ENCODE measurements at regions of chr10 and their contacts with region 1.

Region 1: DNA sequence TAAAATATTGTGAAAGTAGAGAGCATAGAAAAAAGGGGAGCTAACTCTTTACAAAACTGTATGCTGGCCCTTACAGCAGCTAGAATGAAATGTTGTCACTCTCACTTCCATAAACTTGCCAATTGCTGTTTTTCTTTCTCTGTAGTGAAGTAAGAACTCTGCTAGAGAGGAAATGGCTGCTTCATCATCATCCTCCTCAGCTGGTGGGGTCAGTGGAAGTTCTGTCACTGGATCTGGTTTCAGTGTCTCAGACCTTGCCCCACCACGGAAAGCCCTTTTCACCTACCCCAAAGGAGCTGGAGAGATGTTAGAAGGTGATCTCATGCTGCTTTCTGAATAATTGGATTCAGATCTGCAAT is 7.6 kb upstream of the ASCC1 start:
- DNase-seq: no peak
- ATAC-seq: no peak
- H3K4me3 ChIP-seq: no peak overlapping the region
- H3K4me3 Mint-ChIP-seq: peak overlapping the region in 1 of 3 donors; percentile 55
- H3K27ac ChIP-seq: no peak overlapping the region
- H3K27ac Mint-ChIP-seq: peak overlapping the region in 1 of 2 donors; percentile 62
- H3K4me1 ChIP-seq: peaks cover 25 to 43% of the 10 kb centered on the region in 2 experiments
- H3K4me1 Mint-ChIP-seq: peaks cover 54 to 64% (median 56%) of the 10 kb centered on the region in 3 donors
- H3K27me3 ChIP-seq: no peaks in the 10 kb centered on the region
- H3K27me3 Mint-ChIP-seq: no peaks in the 10 kb centered on the region

Region 2: GRCh38 chr10:70656489-70656888 is 1567.2 kb before region 1 on chr10:
- CTCF ChIA-PET with region 1: no interaction called
- POLR2A ChIA-PET with region 1: no interaction called
- DNase-seq: no peak
- ATAC-seq: peak in 1 of 4 experiments; percentile 30
- H3K4me3 ChIP-seq: no peak overlapping the region
- H3K4me3 Mint-ChIP-seq: no peak overlapping the region
- H3K27ac ChIP-seq: no peak overlapping the region
- H3K27ac Mint-ChIP-seq: no peak overlapping the region
- H3K4me1 ChIP-seq: peaks cover 0 to 4% of the 10 kb centered on the region in 2 experiments
- H3K4me1 Mint-ChIP-seq: peaks cover 0 to 8% (median 0%) of the 10 kb centered on the region in 3 donors
- H3K27me3 ChIP-seq: peaks cover 0 to 1% of the 10 kb centered on the region in 2 experiments
- H3K27me3 Mint-ChIP-seq: peaks cover 0 to under 1% of the 10 kb centered on the region in 2 donors

Region 3: GRCh38 chr10:72048450-72049124 is 175.1 kb before region 1 on chr10:
- CTCF ChIA-PET with region 1: interaction called in 1 of 2 experiments, 10 read pairs
- POLR2A ChIA-PET with region 1: no interaction called
- DNase-seq: peak; percentile 66 to 95 (median 82)
- ATAC-seq: peak; percentile 85 to 98 (median 96)
- H3K4me3 ChIP-seq: no peak overlapping the region
- H3K4me3 Mint-ChIP-seq: no peak overlapping the region
- H3K27ac ChIP-seq: no peak overlapping the region
- H3K27ac Mint-ChIP-seq: peak overlapping the region; percentile 21 to 72
- H3K4me1 ChIP-seq: no peaks in the 10 kb centered on the region
- H3K4me1 Mint-ChIP-seq: peaks cover 7 to 8% (median 7%) of the 10 kb centered on the region in 3 donors
- H3K27me3 ChIP-seq: peaks cover 0 to under 1% of the 10 kb centered on the region in 2 experiments
- H3K27me3 Mint-ChIP-seq: no peaks in the 10 kb centered on the region

Region 4: GRCh38 chr10:72206511-72207229 is 17.1 kb before region 1 on chr10:
- CTCF ChIA-PET with region 1: interaction called, 3 read pairs
- POLR2A ChIA-PET with region 1: interaction called in 1 of 2 experiments, 10 read pairs
- DNase-seq: no peak
- ATAC-seq: no peak
- H3K4me3 ChIP-seq: no peak overlapping the region
- H3K4me3 Mint-ChIP-seq: no peak overlapping the region
- H3K27ac ChIP-seq: no peak overlapping the region
- H3K27ac Mint-ChIP-seq: peak overlapping the region in 1 of 2 donors; percentile 28
- H3K4me1 ChIP-seq: peaks cover 0 to 8% of the 10 kb centered on the region in 2 experiments
- H3K4me1 Mint-ChIP-seq: peaks cover 8 to 13% (median 11%) of the 10 kb centered on the region in 3 donors
- H3K27me3 ChIP-seq: no peaks in the 10 kb centered on the region
- H3K27me3 Mint-ChIP-seq: no peaks in the 10 kb centered on the region

Region 5: GRCh38 chr10:72238392-72239175 is 14.9 kb after region 1 on chr10:
- CTCF ChIA-PET with region 1: interaction called, 5 to 7 read pairs
- POLR2A ChIA-PET with region 1: interaction called in 1 of 2 experiments, 10 read pairs
- DNase-seq: no peak
- ATAC-seq: no peak
- H3K4me3 ChIP-seq: no peak overlapping the region
- H3K4me3 Mint-ChIP-seq: no peak overlapping the region
- H3K27ac ChIP-seq: no peak overlapping the region
- H3K27ac Mint-ChIP-seq: no peak overlapping the region
- H3K4me1 ChIP-seq: peaks cover 6 to 22% of the 10 kb centered on the region in 2 experiments
- H3K4me1 Mint-ChIP-seq: peaks cover 32 to 38% (median 34%) of the 10 kb centered on the region in 3 donors
- H3K27me3 ChIP-seq: no peaks in the 10 kb centered on the region
- H3K27me3 Mint-ChIP-seq: no peaks in the 10 kb centered on the region

Region 6: GRCh38 chr10:72273410-72274212 is 49.9 kb after region 1 on chr10 and contains the start of gene DDIT4:
- CTCF ChIA-PET with region 1: interaction called, 3 to 15 read pairs
- POLR2A ChIA-PET with region 1: interaction called, 3 read pairs
- DNase-seq: peak; percentile 88 to 99 (median 98)
- ATAC-seq: peak; percentile 89 to 95 (median 93)
- H3K4me3 ChIP-seq: peak within 1 kb of the TSS; percentile 87 to 95
- H3K4me3 Mint-ChIP-seq: peak within 1 kb of the TSS; percentile 92 to 99 (median 92)
- H3K27ac ChIP-seq: peak within 1 kb of the TSS; percentile 88
- H3K27ac Mint-ChIP-seq: peak within 1 kb of the TSS; percentile 93
- H3K4me1 ChIP-seq: peaks cover 7 to 48% of the 10 kb centered on the region in 2 experiments
- H3K4me1 Mint-ChIP-seq: peaks cover 45 to 58% (median 50%) of the 10 kb centered on the region in 3 donors
- H3K27me3 ChIP-seq: no peaks in the 10 kb centered on the region
- H3K27me3 Mint-ChIP-seq: no peaks in the 10 kb centered on the region
- total RNA-seq, gene DDIT4: 39.9 to 326 (median 52.1) TPM

Region 7: GRCh38 chr10:72292223-72292691 is 68.5 kb after region 1 on chr10:
- CTCF ChIA-PET with region 1: interaction called in 1 of 2 experiments, 3 read pairs
- POLR2A ChIA-PET with region 1: interaction called in 1 of 2 experiments, 22 read pairs
- DNase-seq: no peak
- ATAC-seq: no peak
- H3K4me3 ChIP-seq: no peak overlapping the region
- H3K4me3 Mint-ChIP-seq: peak overlapping the region in 1 of 3 donors; percentile 37
- H3K27ac ChIP-seq: no peak overlapping the region
- H3K27ac Mint-ChIP-seq: peak overlapping the region; percentile 76 to 79
- H3K4me1 ChIP-seq: peaks cover 15 to 60% of the 10 kb centered on the region in 2 experiments
- H3K4me1 Mint-ChIP-seq: peaks cover 55 to 65% (median 64%) of the 10 kb centered on the region in 3 donors
- H3K27me3 ChIP-seq: no peaks in the 10 kb centered on the region
- H3K27me3 Mint-ChIP-seq: no peaks in the 10 kb centered on the region

Region 8: GRCh38 chr10:72308320-72308987 is 84.7 kb after region 1 on chr10:
- CTCF ChIA-PET with region 1: no interaction called
- POLR2A ChIA-PET with region 1: no interaction called
- DNase-seq: no peak
- ATAC-seq: peak in 3 of 4 experiments; percentile 26 to 49 (median 35)
- H3K4me3 ChIP-seq: no peak overlapping the region
- H3K4me3 Mint-ChIP-seq: peak overlapping the region in 1 of 3 donors; percentile 76
- H3K27ac ChIP-seq: no peak overlapping the region
- H3K27ac Mint-ChIP-seq: peak overlapping the region; percentile 65 to 79
- H3K4me1 ChIP-seq: peaks cover 33 to 58% of the 10 kb centered on the region in 2 experiments
- H3K4me1 Mint-ChIP-seq: peaks cover 63 to 74% (median 66%) of the 10 kb centered on the region in 3 donors
- H3K27me3 ChIP-seq: peaks cover 0 to 5% of the 10 kb centered on the region in 2 experiments
- H3K27me3 Mint-ChIP-seq: no peaks in the 10 kb centered on the region

Region 9: DNA sequence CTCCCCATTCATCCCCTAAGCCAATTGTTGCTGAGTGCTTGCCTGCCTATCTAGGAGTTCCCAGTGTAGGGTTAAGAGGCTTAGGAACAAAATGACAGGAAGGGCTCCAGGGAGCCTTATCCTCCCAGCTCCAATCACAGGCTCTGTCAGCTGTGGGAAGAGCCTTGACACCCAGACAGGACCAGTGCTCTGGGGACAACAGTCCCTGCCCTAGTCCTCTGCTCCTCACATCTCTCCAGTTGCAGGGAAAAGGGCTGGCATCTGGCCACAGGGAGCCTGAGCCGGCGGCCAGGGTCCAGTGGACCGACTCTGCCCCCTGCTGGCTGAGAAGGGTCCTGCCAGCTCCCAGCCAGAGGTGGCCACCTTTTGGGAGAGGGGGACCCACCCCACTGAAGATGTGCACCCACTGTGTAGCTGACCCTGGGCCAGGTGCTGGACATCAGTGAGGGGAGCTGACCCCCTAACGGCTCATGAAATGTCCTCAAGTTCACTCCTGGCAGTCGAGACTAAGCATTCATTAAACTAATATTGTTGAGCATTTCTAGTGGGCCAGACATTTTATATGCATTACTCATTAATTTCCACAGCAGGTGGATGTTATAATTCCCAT is 113.4 kb after region 1 on chr10:
- CTCF ChIA-PET with region 1: interaction called, 7 to 14 read pairs
- POLR2A ChIA-PET with region 1: interaction called in 1 of 2 experiments, 7 read pairs
- DNase-seq: peak in 28 of 35 experiments; percentile 26 to 79 (median 53)
- ATAC-seq: peak in 2 of 4 experiments; percentile 21 to 34
- H3K4me3 ChIP-seq: no peak overlapping the region
- H3K4me3 Mint-ChIP-seq: peak overlapping the region in 1 of 3 donors; percentile 50
- H3K27ac ChIP-seq: peak overlapping the region; percentile 90
- H3K27ac Mint-ChIP-seq: peak overlapping the region; percentile 16 to 43
- H3K4me1 ChIP-seq: peaks cover 46 to 63% of the 10 kb centered on the region in 2 experiments
- H3K4me1 Mint-ChIP-seq: peaks cover 59 to 66% (median 60%) of the 10 kb centered on the region in 3 donors
- H3K27me3 ChIP-seq: no peaks in the 10 kb centered on the region
- H3K27me3 Mint-ChIP-seq: no peaks in the 10 kb centered on the region